HepG2 (cell line): ENCODE measurements at regions of chr19 and their contacts with region 1.

Region 1: DNA sequence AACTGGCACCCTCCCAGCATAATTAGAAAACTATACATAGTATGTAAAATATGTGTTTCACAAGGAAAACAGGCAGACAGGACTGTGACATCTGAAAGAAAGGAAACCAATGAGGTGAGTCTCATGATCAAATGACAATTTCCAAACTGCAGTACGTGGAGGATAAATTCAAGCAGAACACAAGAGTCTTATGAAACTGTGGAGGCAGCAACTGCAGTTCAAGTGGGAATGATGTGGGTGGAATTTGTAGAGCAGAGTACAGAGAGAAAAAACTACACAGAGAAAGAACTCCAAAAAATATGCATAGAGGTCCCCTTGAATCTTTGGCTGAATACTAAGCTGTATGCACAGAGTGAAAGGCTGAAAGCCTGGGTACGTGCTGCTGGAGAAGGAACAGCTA is 9.7 kb downstream of the SIGLEC6 start:
- DNase-seq: no peak
- ATAC-seq: no peak
- H3K4me3 ChIP-seq: no peak overlapping the region
- H3K27ac ChIP-seq: no peak overlapping the region
- H3K4me1 ChIP-seq: no peaks in the 10 kb centered on the region
- H3K27me3 ChIP-seq: no peaks in the 10 kb centered on the region
- CTCF ChIP-seq: no peak
- EP300 ChIP-seq: no peak
- POLR2A ChIP-seq: no peak
- RAD21 ChIP-seq: no peak

Region 2: GRCh38 chr19:51480590-51480989 is 41.2 kb before region 1 on chr19:
- CTCF ChIA-PET with region 1: no interaction called
- POLR2A ChIA-PET with region 1: no interaction called
- in situ Hi-C with region 1: no loop called
- intact Hi-C with region 1: loop called (anchors 2 kb)
- DNase-seq: peak; percentile 20
- ATAC-seq: peak; percentile 52; the same call in 1 of the 3 replicates
- H3K4me3 ChIP-seq: no peak overlapping the region
- H3K27ac ChIP-seq: no peak overlapping the region
- H3K4me1 ChIP-seq: peaks cover 13% of the 10 kb centered on the region
- H3K27me3 ChIP-seq: no peaks in the 10 kb centered on the region
- CTCF ChIP-seq: no peak
- EP300 ChIP-seq: no peak
- POLR2A ChIP-seq: no peak
- RAD21 ChIP-seq: no peak

Region 3: GRCh38 chr19:51552996-51553725 is 31.4 kb after region 1 on chr19:
- CTCF ChIA-PET with region 1: no interaction called
- POLR2A ChIA-PET with region 1: no interaction called
- in situ Hi-C with region 1: no loop called
- intact Hi-C with region 1: no loop called
- DNase-seq: peak; percentile 39
- ATAC-seq: peak; percentile 66
- H3K4me3 ChIP-seq: no peak overlapping the region
- H3K27ac ChIP-seq: no peak overlapping the region
- H3K4me1 ChIP-seq: no peaks in the 10 kb centered on the region
- H3K27me3 ChIP-seq: no peaks in the 10 kb centered on the region; a peak in 1 of 5 replicates
- CTCF ChIP-seq: no peak
- EP300 ChIP-seq: no peak
- POLR2A ChIP-seq: no peak
- RAD21 ChIP-seq: no peak